ENCODE measurements at regions of chr14 and their contacts with region 1.

Region 1: GRCh38 chr14:22556990-22557623 is 31.9 kb downstream of the DAD1 start:
- DNase-seq: no peak
- H3K4me3 ChIP-seq: peak overlapping the region; percentile 44
- CTCF ChIP-seq: peak; percentile 96

Region 2: DNA sequence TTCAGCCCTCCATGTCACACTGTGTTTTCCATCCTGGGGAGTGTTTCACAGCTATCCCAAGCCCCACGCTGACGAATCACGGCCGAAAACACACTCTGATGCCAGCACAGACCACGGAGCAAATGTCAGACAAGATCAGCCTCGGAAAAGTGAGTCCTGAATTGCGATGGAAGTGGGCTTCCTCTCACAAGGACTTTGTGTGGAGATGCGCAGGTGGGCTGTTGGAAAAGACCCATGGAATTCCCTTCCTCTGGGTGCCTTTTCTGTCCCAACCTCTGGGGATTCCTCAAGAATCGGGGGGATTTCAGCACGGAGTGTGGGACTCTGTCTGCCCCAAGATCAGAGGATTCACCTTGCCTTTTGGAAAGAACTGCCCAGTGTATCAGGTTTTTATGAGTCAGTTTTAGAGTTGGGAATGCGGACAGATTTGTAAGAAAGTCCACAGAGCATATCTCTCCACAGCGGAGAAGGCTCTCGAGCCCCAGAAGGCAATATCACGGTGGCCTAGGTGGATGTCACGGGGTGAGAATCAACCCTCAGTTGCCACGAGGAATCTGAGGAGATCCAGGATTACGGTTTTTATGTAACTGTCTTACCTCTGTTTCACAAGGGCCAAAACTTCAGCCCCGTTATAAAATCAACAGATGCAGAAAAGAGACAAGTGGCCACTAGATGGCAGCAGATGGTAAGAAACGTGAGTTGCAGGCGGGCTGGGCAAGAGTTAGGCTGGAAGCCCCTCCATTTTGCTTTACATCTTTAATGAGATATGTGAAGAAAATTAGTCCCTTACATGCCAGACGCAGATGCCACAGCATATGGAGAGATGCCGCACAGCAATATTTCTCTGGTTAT is 170.0 kb before region 1 on chr14:
- CTCF ChIA-PET with region 1: interaction called, 395 read pairs
- POLR2A ChIA-PET with region 1: interaction called, 3 read pairs
- DNase-seq: no peak
- H3K4me3 ChIP-seq: peak overlapping the region; percentile 13
- CTCF ChIP-seq: peak; percentile 68

Region 3: GRCh38 chr14:22545842-22546721 is 11.0 kb before region 1 on chr14:
- CTCF ChIA-PET with region 1: interaction called, 54 read pairs
- POLR2A ChIA-PET with region 1: interaction called, 3 read pairs
- DNase-seq: no peak
- H3K4me3 ChIP-seq: 0 out of 2 replicates have a peak overlapping the region, but pooled peaks have one; percentile 7
- CTCF ChIP-seq: no peak

Region 4: DNA sequence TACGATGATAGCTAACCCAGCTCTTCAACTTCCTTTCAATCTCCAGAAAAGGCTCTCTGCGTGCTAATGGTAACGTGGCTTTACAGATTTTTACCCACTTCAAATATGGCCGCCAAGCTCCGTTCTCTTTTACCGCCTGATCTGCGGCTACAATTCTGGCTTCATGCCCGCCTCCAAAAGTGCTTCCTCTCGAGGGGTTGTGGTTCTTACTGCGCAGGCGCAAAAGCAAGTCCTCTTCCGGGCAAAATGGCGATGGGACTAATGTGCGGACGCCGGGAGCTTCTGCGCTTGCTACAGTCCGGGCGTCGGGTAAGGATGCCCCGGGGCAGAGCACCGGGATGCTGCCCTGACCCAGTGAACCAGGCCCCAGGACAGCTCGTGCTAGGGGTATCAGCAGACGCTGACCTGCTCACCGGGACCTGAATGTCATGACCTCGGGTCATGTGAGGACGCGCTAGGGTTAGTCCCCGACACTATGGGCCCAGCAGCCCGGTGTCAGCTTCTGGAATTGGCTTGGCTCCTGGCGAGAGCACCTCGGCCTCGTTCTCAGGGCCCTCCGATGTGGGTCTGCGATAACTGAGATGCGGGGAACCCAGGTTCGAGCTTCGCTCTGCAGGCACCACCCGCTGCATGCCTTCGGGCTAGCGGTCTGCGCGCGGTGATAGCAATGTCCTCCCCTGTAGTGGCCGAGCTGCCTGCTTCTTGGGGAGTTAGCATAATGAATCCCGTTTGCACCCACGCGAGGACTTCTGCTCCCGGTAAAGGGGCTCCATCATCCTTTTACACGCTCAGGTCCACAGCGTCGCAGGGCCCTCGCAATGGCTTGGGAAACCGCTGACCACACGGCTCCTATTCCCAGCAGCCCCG is 209.6 kb after region 1 on chr14 and contains the start of gene OXA1L:
- CTCF ChIA-PET with region 1: interaction called, 28 read pairs
- POLR2A ChIA-PET with region 1: no interaction called
- DNase-seq: peak; percentile 86
- H3K4me3 ChIP-seq: peak within 1 kb of the TSS; percentile 99
- CTCF ChIP-seq: no peak

Region 5: DNA sequence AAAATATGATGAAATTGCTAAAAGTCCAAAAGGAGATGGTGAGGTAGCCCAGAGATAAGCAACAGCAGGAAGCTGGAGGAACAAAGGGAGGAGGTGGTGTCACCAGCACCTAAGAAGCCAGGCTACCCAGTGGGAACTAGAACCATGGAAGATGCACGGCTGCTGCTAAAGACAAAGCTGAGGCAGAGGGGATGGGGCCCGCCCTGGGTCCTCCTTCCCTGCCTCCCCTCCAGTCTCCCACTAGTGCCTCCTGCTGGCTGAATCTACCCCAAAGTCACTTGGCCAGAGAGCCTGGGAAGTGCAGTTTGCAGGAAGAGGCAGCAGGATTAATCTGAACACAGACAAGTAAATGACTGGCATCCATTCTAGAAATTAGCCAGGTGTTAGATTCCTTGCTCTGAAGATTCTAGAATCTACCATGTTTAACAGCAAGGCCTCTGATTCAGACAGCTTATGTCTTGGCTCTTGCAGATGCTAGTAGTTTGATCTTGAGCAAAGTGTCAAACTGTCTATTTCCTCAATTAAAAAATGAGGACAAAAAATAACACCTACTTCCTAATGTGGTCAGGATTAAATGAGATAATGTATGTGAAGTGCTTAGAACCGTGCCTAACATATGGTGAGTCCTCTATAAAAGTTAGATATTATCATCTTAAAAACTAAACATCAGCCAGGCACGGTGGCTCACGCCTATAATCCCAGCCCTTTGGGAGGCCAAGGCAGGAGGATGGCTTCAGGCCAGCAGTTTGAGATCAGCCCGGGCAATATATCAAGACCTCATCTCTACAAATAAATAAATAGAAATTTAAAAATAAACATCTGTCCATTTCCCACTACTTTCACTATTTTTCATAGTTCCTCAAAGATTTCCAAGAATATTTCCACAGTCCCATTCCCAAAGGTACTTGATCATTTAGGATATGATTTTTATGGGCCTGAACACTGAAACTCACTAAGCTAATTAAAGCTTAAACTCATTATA is 308.6 kb after region 1 on chr14:
- CTCF ChIA-PET with region 1: interaction called, 36 read pairs
- POLR2A ChIA-PET with region 1: no interaction called
- DNase-seq: no peak
- H3K4me3 ChIP-seq: no peak overlapping the region
- CTCF ChIP-seq: peak; percentile 17

Region 6: GRCh38 chr14:22918804-22919600 is 361.9 kb after region 1 on chr14 and contains the start of gene RBM23:
- CTCF ChIA-PET with region 1: interaction called, 21 read pairs
- POLR2A ChIA-PET with region 1: no interaction called
- DNase-seq: peak; percentile 99
- H3K4me3 ChIP-seq: peak within 1 kb of the TSS; percentile 76
- CTCF ChIP-seq: no peak